ENCODE measurements at regions of chr10 and their contacts with region 1.

Region 1: DNA sequence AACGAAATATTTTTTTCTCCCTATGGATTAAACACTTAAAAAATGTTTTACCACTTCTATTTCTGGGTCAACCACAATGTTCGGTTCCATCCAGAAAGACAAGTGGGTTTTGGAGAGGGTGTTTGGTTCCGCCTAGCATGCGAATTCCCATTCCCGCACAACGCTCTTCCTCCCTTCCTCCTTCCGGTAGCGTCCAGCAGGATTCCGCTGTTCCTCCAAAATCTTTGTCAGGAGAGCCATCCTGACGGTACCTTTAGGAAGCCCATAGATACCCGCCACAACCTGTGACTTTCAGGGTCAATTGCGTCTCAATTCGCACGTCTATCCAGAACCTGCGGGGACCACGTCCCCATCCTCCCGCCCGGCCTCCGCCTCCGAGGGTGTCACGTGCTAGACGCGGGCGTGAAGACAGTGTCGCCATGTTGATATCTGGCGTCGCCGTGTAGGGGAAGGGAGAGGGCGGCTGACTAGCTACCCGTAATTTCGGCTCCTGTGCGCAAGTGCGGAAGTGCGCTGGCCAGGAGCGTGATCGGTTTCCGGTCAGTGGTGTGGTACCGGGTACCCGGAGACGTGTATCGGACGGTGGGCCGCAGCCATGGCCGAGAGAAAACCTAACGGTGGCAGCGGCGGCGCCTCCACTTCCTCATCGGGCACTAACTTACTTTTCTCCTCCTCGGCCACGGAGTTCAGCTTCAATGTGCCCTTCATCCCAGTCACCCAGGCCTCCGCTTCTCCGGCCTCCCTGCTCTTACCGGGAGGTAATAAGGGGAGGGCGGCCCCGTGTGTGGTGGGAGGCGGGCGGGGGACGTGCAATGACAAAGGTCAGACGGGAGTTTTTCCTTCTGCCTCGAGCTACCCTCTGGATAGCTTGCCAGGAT is at the start of gene SEC23IP:
- DNase-seq: peak; percentile 93
- ATAC-seq: peak; percentile 93
- H3K4me3 ChIP-seq: peak within 1 kb of the TSS; percentile 81 to 96 (median 87)
- H3K27ac ChIP-seq: peak within 1 kb of the TSS; percentile 74
- H3K4me1 ChIP-seq: peaks cover 66% of the 10 kb centered on the region
- H3K27me3 ChIP-seq: no peaks in the 10 kb centered on the region; a peak in 1 of 5 replicates
- CTCF ChIP-seq: peak; percentile 25
- EP300 ChIP-seq: peak in 1 of 2 experiments; percentile 61; a peak in 1 of 4 replicates
- POLR2A ChIP-seq: peak; percentile 92 to 94
- RAD21 ChIP-seq: peak; percentile 22; the same call in 1 of the 2 replicates
- total RNA-seq, gene SEC23IP: 57.7 and 84.4 TPM in 2 replicates

Region 2: GRCh38 chr10:119872860-119873681 is 19.4 kb before region 1 on chr10:
- CTCF ChIA-PET with region 1: no interaction called
- POLR2A ChIA-PET with region 1: interaction called, 79 read pairs
- in situ Hi-C with region 1: no loop called
- intact Hi-C with region 1: loop called (anchors 2 kb)
- DNase-seq: peak; percentile 68
- ATAC-seq: peak; percentile 92
- H3K4me3 ChIP-seq: peak overlapping the region; percentile 79 to 98 (median 85)
- H3K27ac ChIP-seq: peak overlapping the region; percentile 88
- H3K4me1 ChIP-seq: peaks cover 36% of the 10 kb centered on the region
- H3K27me3 ChIP-seq: no peaks in the 10 kb centered on the region; a peak in 1 of 5 replicates
- CTCF ChIP-seq: peak; percentile 17; the same call in 1 of the 2 replicates
- EP300 ChIP-seq: no peak
- POLR2A ChIP-seq: peak; percentile 77 to 78
- RAD21 ChIP-seq: peak; percentile 16; the same call in 1 of the 2 replicates

Region 3: GRCh38 chr10:119878524-119878923 is 13.9 kb before region 1 on chr10:
- CTCF ChIA-PET with region 1: no interaction called
- POLR2A ChIA-PET with region 1: interaction called, 79 read pairs
- in situ Hi-C with region 1: no loop called
- intact Hi-C with region 1: loop called (anchors 2 kb)
- DNase-seq: no peak
- ATAC-seq: no peak
- H3K4me3 ChIP-seq: no peak overlapping the region
- H3K27ac ChIP-seq: no peak overlapping the region
- H3K4me1 ChIP-seq: peaks cover 9% of the 10 kb centered on the region
- H3K27me3 ChIP-seq: no peaks in the 10 kb centered on the region
- CTCF ChIP-seq: no peak
- EP300 ChIP-seq: no peak
- POLR2A ChIP-seq: no peak
- RAD21 ChIP-seq: no peak

Region 4: GRCh38 chr10:119919826-119920225 is 27.4 kb after region 1 on chr10:
- CTCF ChIA-PET with region 1: no interaction called
- POLR2A ChIA-PET with region 1: no interaction called
- in situ Hi-C with region 1: no loop called
- intact Hi-C with region 1: no loop called
- DNase-seq: no peak
- ATAC-seq: no peak
- H3K4me3 ChIP-seq: no peak overlapping the region
- H3K27ac ChIP-seq: no peak overlapping the region
- H3K4me1 ChIP-seq: no peaks in the 10 kb centered on the region
- H3K27me3 ChIP-seq: no peaks in the 10 kb centered on the region
- CTCF ChIP-seq: no peak
- EP300 ChIP-seq: no peak
- POLR2A ChIP-seq: no peak
- RAD21 ChIP-seq: no peak

Region 5: DNA sequence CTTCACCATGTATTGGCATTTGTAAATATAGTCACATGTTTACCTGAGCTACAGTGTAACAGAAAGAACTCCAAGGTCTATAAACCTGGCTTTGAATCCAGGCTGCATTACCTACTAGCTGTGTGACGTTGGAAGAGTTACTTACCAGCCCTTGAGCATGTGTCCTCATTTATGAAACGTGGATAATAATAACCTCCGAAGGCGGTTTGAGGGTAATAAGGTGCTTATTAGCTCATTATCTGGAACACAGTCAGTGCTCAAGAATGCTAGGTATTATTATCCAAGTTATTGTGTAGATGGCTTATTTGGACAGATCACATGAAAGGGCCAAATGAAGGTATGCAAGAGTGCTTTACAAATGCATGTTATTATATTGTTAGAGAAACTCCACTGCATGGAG is 65.0 kb after region 1 on chr10:
- CTCF ChIA-PET with region 1: no interaction called
- POLR2A ChIA-PET with region 1: no interaction called
- in situ Hi-C with region 1: no loop called
- intact Hi-C with region 1: no loop called
- DNase-seq: no peak
- ATAC-seq: no peak
- H3K4me3 ChIP-seq: no peak overlapping the region
- H3K27ac ChIP-seq: no peak overlapping the region
- H3K4me1 ChIP-seq: no peaks in the 10 kb centered on the region
- H3K27me3 ChIP-seq: no peaks in the 10 kb centered on the region; a peak in 1 of 5 replicates
- CTCF ChIP-seq: no peak
- EP300 ChIP-seq: no peak
- POLR2A ChIP-seq: no peak
- RAD21 ChIP-seq: no peak